Psoas muscle (tissue), 8 donors: ENCODE measurements at regions of chr2 and their contacts with region 1.

Region 1: GRCh38 chr2:109613922-109614714 is at the starts of genes SEPTIN10 and SOWAHC:
- DNase-seq: peak; percentile 97 to 98
- ATAC-seq: peak; percentile 97 to 98 (median 98)
- H3K4me3 ChIP-seq: peak within 1 kb of the TSS; percentile 77
- H3K27ac ChIP-seq: peak within 1 kb of the TSS; percentile 97
- H3K4me1 ChIP-seq: peaks cover 21% of the 10 kb centered on the region
- H3K27me3 ChIP-seq: no peaks in the 10 kb centered on the region
- CTCF ChIP-seq: peak; percentile 3
- total RNA-seq, gene SEPTIN10: 26.6 to 39.8 (median 35.4) TPM
- total RNA-seq, gene SOWAHC: 0.75 to 1.1 (median 0.93) TPM

Region 2: DNA sequence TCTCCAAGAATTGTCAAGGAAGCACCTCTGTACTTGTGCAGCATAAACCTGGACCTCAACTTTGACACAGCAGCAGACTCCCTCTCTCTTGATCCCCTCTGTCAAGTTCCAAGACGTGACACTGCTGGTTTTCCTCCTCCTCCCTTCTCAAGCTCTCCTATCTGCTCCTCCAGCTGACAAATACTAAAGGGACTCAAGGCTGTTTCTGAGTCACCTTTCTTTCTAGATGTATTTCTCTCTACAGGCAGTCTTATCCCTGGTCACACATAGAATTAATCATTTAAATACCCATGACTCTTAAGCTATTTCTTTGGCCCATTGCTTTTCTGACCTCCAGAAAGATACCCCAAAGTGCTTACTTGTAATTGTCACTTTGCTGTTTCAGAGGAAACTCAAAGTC is 53.9 kb before region 1 on chr2:
- intact Hi-C with region 1: loop called in 1 of 2 experiments (anchors 5 kb)
- DNase-seq: no peak
- ATAC-seq: no peak
- H3K4me3 ChIP-seq: no peak overlapping the region
- H3K27ac ChIP-seq: no peak overlapping the region
- H3K4me1 ChIP-seq: no peaks in the 10 kb centered on the region
- H3K27me3 ChIP-seq: no peaks in the 10 kb centered on the region
- CTCF ChIP-seq: no peak